A549 (cell line): ENCODE measurements at regions of chr11 and their contacts with region 1.

Region 1: GRCh38 chr11:118689851-118690552 is 10.6 kb upstream of the TREH start:
- DNase-seq: peak; percentile 79 to 93
- ATAC-seq: peak; percentile 96
- H3K4me3 ChIP-seq: peak overlapping the region; percentile 34
- H3K27ac ChIP-seq: peak overlapping the region; percentile 91 to 99
- H3K4me1 ChIP-seq: peaks cover 11% of the 10 kb centered on the region; the same call in 1 of the 3 replicates
- CTCF ChIP-seq: peak; percentile 86
- EP300 ChIP-seq: no peak
- POLR2A ChIP-seq: no peak
- RAD21 ChIP-seq: peak; percentile 74 to 78

Region 2: DNA sequence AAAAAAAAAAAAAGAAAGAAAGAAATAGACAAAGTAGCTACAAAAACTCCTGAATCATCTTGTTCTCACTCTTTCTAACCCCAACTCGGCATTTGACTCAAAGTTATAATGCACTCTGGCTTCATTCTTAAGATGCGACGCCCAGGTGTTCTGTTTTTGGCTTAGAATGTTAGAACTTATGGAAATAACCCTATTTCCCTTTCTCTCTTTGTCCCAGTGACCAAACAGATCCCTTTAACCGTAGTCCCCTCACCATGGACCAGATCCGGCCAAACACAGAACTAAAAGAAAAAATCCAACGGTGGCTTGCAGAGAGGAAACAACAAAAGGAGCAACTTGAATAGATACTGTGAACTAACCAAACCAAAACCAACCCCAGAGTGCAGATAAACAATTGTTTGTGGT is 293.9 kb before region 1 on chr11:
- CTCF ChIA-PET with region 1: no interaction called
- POLR2A ChIA-PET with region 1: no interaction called
- DNase-seq: no peak
- ATAC-seq: no peak
- H3K4me3 ChIP-seq: no peak overlapping the region
- H3K27ac ChIP-seq: no peak overlapping the region
- H3K4me1 ChIP-seq: no peaks in the 10 kb centered on the region
- CTCF ChIP-seq: no peak
- EP300 ChIP-seq: no peak
- POLR2A ChIP-seq: no peak
- RAD21 ChIP-seq: no peak

Region 3: GRCh38 chr11:118649941-118650340 is 40.1 kb before region 1 on chr11:
- CTCF ChIA-PET with region 1: no interaction called
- POLR2A ChIA-PET with region 1: no interaction called
- DNase-seq: no peak
- ATAC-seq: no peak
- H3K4me3 ChIP-seq: no peak overlapping the region
- H3K27ac ChIP-seq: no peak overlapping the region
- H3K4me1 ChIP-seq: no peaks in the 10 kb centered on the region
- CTCF ChIP-seq: no peak
- EP300 ChIP-seq: no peak
- POLR2A ChIP-seq: no peak
- RAD21 ChIP-seq: no peak

Region 4: GRCh38 chr11:118666371-118666770 is 23.6 kb before region 1 on chr11:
- CTCF ChIA-PET with region 1: interaction called, 10 read pairs
- POLR2A ChIA-PET with region 1: no interaction called
- DNase-seq: no peak
- ATAC-seq: no peak
- H3K4me3 ChIP-seq: no peak overlapping the region
- H3K27ac ChIP-seq: no peak overlapping the region
- H3K4me1 ChIP-seq: no peaks in the 10 kb centered on the region
- CTCF ChIP-seq: no peak
- EP300 ChIP-seq: no peak
- POLR2A ChIP-seq: no peak
- RAD21 ChIP-seq: no peak

Region 5: GRCh38 chr11:118705111-118705741 is 15.2 kb after region 1 on chr11:
- CTCF ChIA-PET with region 1: interaction called, 19 read pairs
- POLR2A ChIA-PET with region 1: no interaction called
- DNase-seq: no peak
- ATAC-seq: no peak
- H3K4me3 ChIP-seq: no peak overlapping the region
- H3K27ac ChIP-seq: no peak overlapping the region
- H3K4me1 ChIP-seq: no peaks in the 10 kb centered on the region
- CTCF ChIP-seq: no peak
- EP300 ChIP-seq: no peak
- POLR2A ChIP-seq: no peak
- RAD21 ChIP-seq: no peak

Region 6: GRCh38 chr11:118791111-118791965 is 101.3 kb after region 1 on chr11 and contains the start of gene DDX6:
- CTCF ChIA-PET with region 1: interaction called, 12 read pairs
- POLR2A ChIA-PET with region 1: interaction called, 9 read pairs
- DNase-seq: peak; percentile 62 to 81
- ATAC-seq: peak; percentile 79 to 81
- H3K4me3 ChIP-seq: peak within 1 kb of the TSS; percentile 69
- H3K27ac ChIP-seq: peak within 1 kb of the TSS; percentile 100
- H3K4me1 ChIP-seq: peaks cover 23% of the 10 kb centered on the region
- CTCF ChIP-seq: no peak; the same call in 2 of the 3 replicates
- EP300 ChIP-seq: no peak
- POLR2A ChIP-seq: peak; percentile 62
- RAD21 ChIP-seq: peak in 1 of 2 experiments; percentile 14; a peak in 1 of 5 replicates
- polyA plus RNA-seq, gene DDX6: 41.4 and 43.8 TPM in 2 replicates

Region 7: GRCh38 chr11:118928108-118928870 is 238.3 kb after region 1 on chr11:
- CTCF ChIA-PET with region 1: interaction called, 16 read pairs
- POLR2A ChIA-PET with region 1: no interaction called
- DNase-seq: peak; percentile 91 to 93
- ATAC-seq: peak; percentile 65 to 78
- H3K4me3 ChIP-seq: peak overlapping the region; percentile 94
- H3K27ac ChIP-seq: peak overlapping the region; percentile 98 to 100
- H3K4me1 ChIP-seq: peaks cover 27% of the 10 kb centered on the region
- CTCF ChIP-seq: peak; percentile 74
- EP300 ChIP-seq: peak in 1 of 2 experiments; percentile 38; a peak in 1 of 5 replicates
- POLR2A ChIP-seq: no peak
- RAD21 ChIP-seq: peak; percentile 79 to 83

Region 8: DNA sequence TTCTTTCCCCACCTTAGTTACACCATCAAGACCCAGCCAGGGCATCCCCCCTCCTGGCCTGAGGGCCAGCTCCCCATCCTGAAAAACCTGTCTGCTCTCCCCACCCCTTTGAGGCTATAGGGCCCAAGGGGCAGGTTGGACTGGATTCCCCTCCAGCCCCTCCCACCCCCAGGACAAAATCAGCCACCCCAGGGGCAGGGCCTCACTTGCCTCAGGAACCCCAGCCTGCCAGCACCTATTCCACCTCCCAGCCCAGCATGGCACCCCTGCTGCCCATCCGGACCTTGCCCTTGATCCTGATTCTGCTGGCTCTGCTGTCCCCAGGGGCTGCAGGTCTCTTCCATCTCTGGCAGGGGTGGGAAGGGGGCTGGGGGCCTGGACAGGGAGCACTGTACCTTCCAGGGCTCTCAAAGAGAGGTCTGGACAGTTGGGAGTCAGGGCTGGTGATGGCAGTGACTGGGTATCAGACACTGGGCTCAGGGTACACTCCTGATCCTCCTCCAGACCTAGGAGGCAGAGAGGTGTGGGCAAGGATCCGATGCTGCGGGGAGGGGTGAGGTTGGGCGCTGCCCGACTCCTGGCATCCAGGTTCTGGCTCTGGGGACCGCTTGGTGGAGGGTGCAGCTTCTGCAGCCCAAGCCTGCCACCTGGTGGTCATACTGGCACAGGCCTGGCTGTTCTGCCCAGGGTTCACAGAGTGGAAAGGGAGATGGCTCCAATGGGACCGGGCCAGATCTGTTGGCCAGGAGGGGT is 266.3 kb after region 1 on chr11 and contains the start of gene UPK2:
- CTCF ChIA-PET with region 1: interaction called, 61 read pairs
- POLR2A ChIA-PET with region 1: no interaction called
- DNase-seq: peak; percentile 73 to 89
- ATAC-seq: peak; percentile 94 to 99
- H3K4me3 ChIP-seq: no peak within 1 kb of the TSS
- H3K27ac ChIP-seq: peak within 1 kb of the TSS; percentile 27 to 65; a peak in 2 of 6 replicates
- H3K4me1 ChIP-seq: peaks cover 4% of the 10 kb centered on the region; the same call in 1 of the 3 replicates
- CTCF ChIP-seq: peak; percentile 72
- EP300 ChIP-seq: no peak
- POLR2A ChIP-seq: no peak
- RAD21 ChIP-seq: peak; percentile 95 to 97
- polyA plus RNA-seq, gene UPK2: 0.20 and 0.37 TPM in 2 replicates

Region 9: GRCh38 chr11:119168471-119169281 is 478.7 kb after region 1 on chr11 and contains the start of gene NLRX1:
- CTCF ChIA-PET with region 1: no interaction called
- POLR2A ChIA-PET with region 1: no interaction called
- DNase-seq: peak; percentile 86 to 87
- ATAC-seq: peak; percentile 92
- H3K4me3 ChIP-seq: peak within 1 kb of the TSS; percentile 75
- H3K27ac ChIP-seq: peak within 1 kb of the TSS; percentile 95 to 99
- H3K4me1 ChIP-seq: peaks cover 16% of the 10 kb centered on the region
- CTCF ChIP-seq: peak; percentile 73
- EP300 ChIP-seq: no peak
- POLR2A ChIP-seq: peak; percentile 84
- RAD21 ChIP-seq: peak; percentile 15 to 30; a peak in 1 of 5 replicates
- polyA plus RNA-seq, gene NLRX1: 8.4 and 10.4 TPM in 2 replicates